Activated B cell treated with CpG ODN at 0.5 μM for 24 hours (primary cell): ENCODE measurements at regions of chr5 and their contacts with region 1.

Region 1: DNA sequence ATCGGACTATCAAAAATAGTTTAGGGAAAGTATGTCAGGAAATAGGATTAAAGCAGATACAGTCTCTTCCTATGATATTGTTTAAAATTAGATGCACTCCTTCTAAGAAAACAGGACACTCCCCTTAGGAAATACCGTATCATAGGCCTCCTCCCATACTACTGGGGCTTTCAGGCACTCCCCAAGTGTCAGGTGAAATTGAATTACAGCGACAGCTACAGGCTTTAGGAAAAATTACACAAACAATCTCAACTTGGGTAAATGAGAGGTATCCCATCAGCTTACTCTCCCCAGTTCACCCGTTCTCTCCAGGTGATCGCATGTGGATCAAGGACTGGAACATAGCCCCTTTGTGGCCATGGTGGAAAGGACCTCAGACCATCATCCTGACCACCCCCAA is 110.4 kb upstream of the EPB41L4A start:
- DNase-seq: no peak
- ATAC-seq: peak; percentile 53
- H3K4me3 Mint-ChIP-seq: no peak overlapping the region
- H3K27ac Mint-ChIP-seq: peak overlapping the region; percentile 48
- H3K4me1 Mint-ChIP-seq: peaks cover 96% of the 10 kb centered on the region
- H3K27me3 Mint-ChIP-seq: no peaks in the 10 kb centered on the region
- CTCF ChIP-seq: no peak

Region 2: DNA sequence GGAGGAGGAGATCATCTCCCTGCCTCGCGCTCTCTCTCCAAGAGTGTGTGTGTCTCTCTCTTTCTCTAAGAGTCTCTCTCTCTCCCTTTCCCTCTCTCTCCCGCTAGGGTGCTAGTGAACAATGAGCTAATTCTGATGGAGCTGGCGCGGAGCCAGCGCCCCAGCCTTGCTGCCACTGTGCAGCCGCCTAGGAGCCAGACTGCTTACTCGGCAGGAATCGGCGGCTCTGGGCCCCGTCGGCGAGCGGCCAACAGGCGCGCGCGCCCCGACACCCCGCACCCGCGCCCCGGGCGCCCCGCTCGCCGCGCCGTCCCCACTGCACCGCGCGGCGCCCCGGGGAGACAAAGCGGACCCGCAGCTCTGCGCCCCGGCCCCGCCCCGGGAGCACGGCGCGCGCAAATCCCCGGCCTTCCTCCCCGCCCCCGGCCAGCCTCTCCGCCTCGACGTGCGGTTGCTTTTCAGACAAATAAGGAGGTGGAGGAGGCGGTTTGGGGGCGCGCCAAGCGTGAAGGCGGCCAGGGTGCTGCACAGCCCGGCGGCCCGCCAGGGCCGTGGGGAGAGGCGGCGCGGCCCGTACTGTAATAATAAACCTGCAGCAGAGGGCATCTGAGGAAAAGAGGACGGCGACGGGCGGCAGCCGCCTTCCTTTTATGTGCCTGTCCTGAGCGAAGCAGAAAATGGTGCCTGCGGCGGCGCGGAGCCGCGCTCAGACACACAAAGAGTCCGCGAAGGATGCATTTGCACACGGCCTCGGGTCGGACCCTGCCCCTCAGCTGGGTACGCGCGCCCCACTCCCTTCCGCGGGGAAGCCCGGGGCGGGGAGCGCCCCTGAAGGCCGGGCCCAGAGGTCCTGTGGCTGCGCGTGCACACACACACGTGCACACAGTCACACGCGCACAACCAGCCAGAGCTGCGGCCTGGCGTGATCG is 771.9 kb before region 1 on chr5:
- CTCF ChIA-PET with region 1: no interaction called
- POLR2A ChIA-PET with region 1: no interaction called
- intact Hi-C with region 1: loop called (anchors 5 kb)
- DNase-seq: peak; percentile 81
- ATAC-seq: peak; percentile 81
- H3K4me3 Mint-ChIP-seq: peak overlapping the region; percentile 88
- H3K27ac Mint-ChIP-seq: peak overlapping the region; percentile 91
- H3K4me1 Mint-ChIP-seq: peaks cover 23% of the 10 kb centered on the region
- H3K27me3 Mint-ChIP-seq: no peaks in the 10 kb centered on the region
- CTCF ChIP-seq: no peak

Region 3: GRCh38 chr5:112174959-112175594 is 354.4 kb before region 1 on chr5:
- CTCF ChIA-PET with region 1: interaction called, 28 read pairs
- POLR2A ChIA-PET with region 1: no interaction called
- intact Hi-C with region 1: loop called (anchors 1 kb)
- DNase-seq: no peak
- ATAC-seq: peak; percentile 73
- H3K4me3 Mint-ChIP-seq: no peak overlapping the region
- H3K27ac Mint-ChIP-seq: no peak overlapping the region
- H3K4me1 Mint-ChIP-seq: peaks cover 4% of the 10 kb centered on the region
- H3K27me3 Mint-ChIP-seq: no peaks in the 10 kb centered on the region
- CTCF ChIP-seq: no peak

Region 4: GRCh38 chr5:112419986-112420864 is 109.3 kb before region 1 on chr5:
- CTCF ChIA-PET with region 1: interaction called, 7 read pairs
- POLR2A ChIA-PET with region 1: interaction called, 7 read pairs
- intact Hi-C with region 1: loop called (anchors 1 kb)
- DNase-seq: peak; percentile 68
- ATAC-seq: peak; percentile 84
- H3K4me3 Mint-ChIP-seq: peak overlapping the region; percentile 86
- H3K27ac Mint-ChIP-seq: no peak overlapping the region
- H3K4me1 Mint-ChIP-seq: peaks cover 11% of the 10 kb centered on the region
- H3K27me3 Mint-ChIP-seq: peaks cover 14% of the 10 kb centered on the region
- CTCF ChIP-seq: no peak

Region 5: DNA sequence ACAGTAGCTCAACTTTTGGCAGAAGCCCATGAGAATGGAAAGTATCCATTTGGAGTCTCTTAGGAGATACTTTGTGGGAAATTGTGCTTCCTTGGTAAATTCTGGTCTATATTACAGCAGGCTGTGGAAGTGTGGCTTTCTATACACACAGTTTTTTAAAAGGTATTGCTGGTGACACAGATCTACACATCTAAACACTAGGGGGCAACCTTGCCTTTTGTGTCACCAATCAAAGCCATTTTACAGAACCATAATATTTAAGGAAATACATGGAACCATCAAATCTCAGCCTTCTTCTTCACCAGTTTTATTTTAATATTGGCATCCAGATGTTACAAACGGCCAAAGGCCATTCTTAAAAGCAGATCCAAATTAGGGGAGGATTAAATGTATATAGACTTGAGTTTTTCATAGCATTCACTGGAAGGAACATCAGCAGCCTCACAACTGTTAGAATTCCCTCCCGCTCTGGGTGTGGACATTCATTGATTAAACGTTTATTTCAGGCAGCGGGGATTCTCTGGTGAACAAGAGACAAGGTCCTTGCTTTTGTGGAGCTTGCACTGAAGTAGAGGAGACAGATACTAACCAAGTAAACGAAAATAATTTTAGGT is 22.0 kb after region 1 on chr5:
- CTCF ChIA-PET with region 1: interaction called, 13 read pairs
- POLR2A ChIA-PET with region 1: no interaction called
- intact Hi-C with region 1: no loop called
- DNase-seq: no peak
- ATAC-seq: peak; percentile 77
- H3K4me3 Mint-ChIP-seq: no peak overlapping the region
- H3K27ac Mint-ChIP-seq: no peak overlapping the region
- H3K4me1 Mint-ChIP-seq: peaks cover 33% of the 10 kb centered on the region
- H3K27me3 Mint-ChIP-seq: no peaks in the 10 kb centered on the region
- CTCF ChIP-seq: peak; percentile 16

Region 6: GRCh38 chr5:112921833-112922817 is 392.6 kb after region 1 on chr5 and contains the start of gene REEP5:
- CTCF ChIA-PET with region 1: no interaction called
- POLR2A ChIA-PET with region 1: interaction called, 14 read pairs
- intact Hi-C with region 1: no loop called
- DNase-seq: peak; percentile 85
- ATAC-seq: peak; percentile 77
- H3K4me3 Mint-ChIP-seq: peak within 1 kb of the TSS; percentile 96
- H3K27ac Mint-ChIP-seq: peak within 1 kb of the TSS; percentile 94
- H3K4me1 Mint-ChIP-seq: peaks cover 80% of the 10 kb centered on the region
- H3K27me3 Mint-ChIP-seq: no peaks in the 10 kb centered on the region
- CTCF ChIP-seq: no peak
- total RNA-seq, gene REEP5: 44.5 and 46.8 TPM in 2 replicates

Region 7: GRCh38 chr5:113513384-113514288 is 984.1 kb after region 1 on chr5 and contains the start of gene YTHDC2:
- CTCF ChIA-PET with region 1: no interaction called
- POLR2A ChIA-PET with region 1: no interaction called
- intact Hi-C with region 1: loop called (anchors 10 kb)
- DNase-seq: peak; percentile 86
- ATAC-seq: peak; percentile 98
- H3K4me3 Mint-ChIP-seq: peak within 1 kb of the TSS; percentile 92
- H3K27ac Mint-ChIP-seq: peak within 1 kb of the TSS; percentile 87
- H3K4me1 Mint-ChIP-seq: peaks cover 28% of the 10 kb centered on the region
- H3K27me3 Mint-ChIP-seq: peaks cover 12% of the 10 kb centered on the region
- CTCF ChIP-seq: no peak
- total RNA-seq, gene YTHDC2: 41.7 and 44.8 TPM in 2 replicates